Lower lobe of right lung (tissue), 2 donors: ENCODE measurements at regions of chr3 and their contacts with region 1.

Region 1: GRCh38 chr3:187679638-187680396 is 9.6 kb upstream of the SST start:
- DNase-seq: peak; percentile 74
- ATAC-seq: peak; percentile 92 to 96
- H3K4me3 ChIP-seq: no peak overlapping the region
- H3K27ac ChIP-seq: no peak overlapping the region
- H3K4me1 ChIP-seq: no peaks in the 10 kb centered on the region
- H3K27me3 ChIP-seq: peaks cover 5% of the 10 kb centered on the region
- CTCF ChIP-seq: peak; percentile 93

Region 2: GRCh38 chr3:187227658-187228258 is 452.1 kb before region 1 on chr3:
- intact Hi-C with region 1: loop called (anchors 10 kb)
- DNase-seq: no peak
- ATAC-seq: peak in 1 of 2 donors; percentile 23
- H3K4me3 ChIP-seq: no peak overlapping the region
- H3K27ac ChIP-seq: no peak overlapping the region
- H3K4me1 ChIP-seq: no peaks in the 10 kb centered on the region
- H3K27me3 ChIP-seq: no peaks in the 10 kb centered on the region
- CTCF ChIP-seq: no peak

Region 3: GRCh38 chr3:187319699-187320302 is 360.0 kb before region 1 on chr3:
- intact Hi-C with region 1: loop called (anchors 5 kb)
- DNase-seq: peak; percentile 72
- ATAC-seq: peak; percentile 91 to 94
- H3K4me3 ChIP-seq: no peak overlapping the region
- H3K27ac ChIP-seq: no peak overlapping the region
- H3K4me1 ChIP-seq: peaks cover 8% of the 10 kb centered on the region
- H3K27me3 ChIP-seq: peaks cover 12% of the 10 kb centered on the region
- CTCF ChIP-seq: peak; percentile 87